CD4-positive, alpha-beta T cell (primary cell): ENCODE measurements at regions of chr1 and their contacts with region 1.

Region 1: GRCh38 chr1:214791961-214792360 is 189.0 kb downstream of the CENPF start:
- DNase-seq: no peak
- ATAC-seq: no peak
- H3K4me3 ChIP-seq: no peak overlapping the region
- H3K4me3 Mint-ChIP-seq: no peak overlapping the region
- H3K27ac ChIP-seq: no peak overlapping the region
- H3K27ac Mint-ChIP-seq: no peak overlapping the region
- H3K4me1 ChIP-seq: no peaks in the 10 kb centered on the region
- H3K4me1 Mint-ChIP-seq: no peaks in the 10 kb centered on the region
- H3K27me3 ChIP-seq: no peaks in the 10 kb centered on the region
- H3K27me3 Mint-ChIP-seq: no peaks in the 10 kb centered on the region
- CTCF ChIP-seq: no peak

Region 2: GRCh38 chr1:214632091-214632490 is 159.9 kb before region 1 on chr1:
- CTCF ChIA-PET with region 1: no interaction called
- POLR2A ChIA-PET with region 1: no interaction called
- intact Hi-C with region 1: no loop called
- DNase-seq: peak in 10 of 14 experiments; percentile 18 to 84 (median 46)
- ATAC-seq: peak; percentile 82
- H3K4me3 ChIP-seq: no peak overlapping the region
- H3K4me3 Mint-ChIP-seq: peak overlapping the region; percentile 80
- H3K27ac ChIP-seq: no peak overlapping the region
- H3K27ac Mint-ChIP-seq: peak overlapping the region; percentile 87
- H3K4me1 ChIP-seq: peaks cover 8% of the 10 kb centered on the region
- H3K4me1 Mint-ChIP-seq: peaks cover 46% of the 10 kb centered on the region
- H3K27me3 ChIP-seq: no peaks in the 10 kb centered on the region
- H3K27me3 Mint-ChIP-seq: no peaks in the 10 kb centered on the region
- CTCF ChIP-seq: no peak

Region 3: DNA sequence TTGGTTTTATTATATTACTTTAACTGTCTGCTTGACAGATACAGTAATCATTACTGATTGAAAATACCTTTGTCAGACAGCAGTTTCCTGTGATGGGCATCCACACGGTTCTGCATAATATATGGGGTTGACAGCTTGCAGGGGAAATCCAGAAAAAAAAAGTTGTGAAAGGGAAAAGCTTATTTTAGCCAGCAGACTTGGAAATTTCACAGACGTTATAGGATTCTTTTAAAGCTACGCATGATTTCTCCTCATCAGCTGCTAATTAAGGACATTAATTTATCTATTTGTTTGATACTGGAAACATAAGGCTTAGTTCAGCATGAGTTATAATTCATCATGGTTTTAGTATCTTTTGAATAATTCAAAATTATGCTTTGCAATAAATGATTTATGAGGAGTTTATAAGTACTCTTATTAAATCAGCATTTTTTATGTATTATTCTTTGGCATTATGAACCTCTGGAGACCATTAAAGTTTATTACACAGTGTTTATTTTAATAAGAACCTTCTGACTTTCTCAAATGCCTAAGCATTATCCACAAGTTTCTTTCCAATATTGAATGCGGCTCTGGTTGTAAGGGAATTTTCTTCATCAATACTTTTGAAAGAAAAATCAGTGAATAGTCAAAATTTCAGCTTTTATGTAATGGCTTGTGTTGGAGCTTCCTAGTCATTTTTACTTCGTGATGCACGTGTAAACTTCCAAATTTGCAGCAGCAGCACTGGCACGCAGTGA is 55.3 kb after region 1 on chr1:
- CTCF ChIA-PET with region 1: no interaction called
- POLR2A ChIA-PET with region 1: no interaction called
- intact Hi-C with region 1: loop called in 1 of 2 experiments (anchors 5 kb)
- DNase-seq: no peak
- ATAC-seq: no peak
- H3K4me3 ChIP-seq: no peak overlapping the region
- H3K4me3 Mint-ChIP-seq: no peak overlapping the region
- H3K27ac ChIP-seq: no peak overlapping the region
- H3K27ac Mint-ChIP-seq: no peak overlapping the region
- H3K4me1 ChIP-seq: no peaks in the 10 kb centered on the region
- H3K4me1 Mint-ChIP-seq: no peaks in the 10 kb centered on the region
- H3K27me3 ChIP-seq: no peaks in the 10 kb centered on the region
- H3K27me3 Mint-ChIP-seq: peaks cover 11% of the 10 kb centered on the region
- CTCF ChIP-seq: no peak

Region 4: DNA sequence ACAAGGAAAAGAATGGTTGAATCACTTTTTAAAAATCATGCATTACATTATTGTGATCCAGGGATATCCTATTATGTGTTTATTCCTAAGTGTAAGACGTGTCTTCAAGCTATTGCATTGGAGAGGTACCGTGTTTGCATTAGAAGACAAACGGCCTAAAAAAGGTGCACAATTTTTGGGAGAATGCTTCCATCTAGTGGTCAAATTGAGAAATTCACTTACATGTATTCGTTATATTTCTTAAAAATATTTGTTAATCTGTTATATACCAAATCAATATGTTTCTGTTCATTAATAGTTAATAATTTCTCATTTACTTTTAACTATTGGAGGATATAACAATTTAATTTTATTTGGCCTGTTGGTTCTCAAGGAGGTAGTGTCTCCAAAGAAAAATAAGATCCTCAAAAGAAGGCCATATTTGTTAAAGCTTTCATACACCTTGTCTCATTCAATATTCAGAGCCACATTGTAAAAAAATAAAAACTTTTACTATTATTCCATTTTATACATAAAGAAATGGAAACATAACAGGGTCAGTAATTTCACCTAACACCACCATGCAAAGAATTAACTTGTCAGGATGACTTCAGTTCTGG is 734.7 kb after region 1 on chr1:
- CTCF ChIA-PET with region 1: no interaction called
- POLR2A ChIA-PET with region 1: no interaction called
- intact Hi-C with region 1: no loop called
- DNase-seq: peak in 3 of 14 experiments; percentile 44 to 66 (median 63)
- ATAC-seq: peak; percentile 41
- H3K4me3 ChIP-seq: no peak overlapping the region
- H3K4me3 Mint-ChIP-seq: no peak overlapping the region
- H3K27ac ChIP-seq: no peak overlapping the region
- H3K27ac Mint-ChIP-seq: no peak overlapping the region
- H3K4me1 ChIP-seq: no peaks in the 10 kb centered on the region
- H3K4me1 Mint-ChIP-seq: peaks cover 5% of the 10 kb centered on the region
- H3K27me3 ChIP-seq: peaks cover 0 to 7% of the 10 kb centered on the region in 2 experiments
- H3K27me3 Mint-ChIP-seq: peaks cover 29% of the 10 kb centered on the region
- CTCF ChIP-seq: peak; percentile 74